ENCODE measurements at regions of chr22 and their contacts with region 1.

Region 1: GRCh38 chr22:30855699-30856518 is 112.7 kb downstream of the MORC2 start:
- DNase-seq: no peak
- H3K4me3 ChIP-seq: no peak overlapping the region
- H3K27me3 ChIP-seq: 0 out of 2 replicates have a peak, but pooled peaks cover 4% of the 10 kb centered on the region
- CTCF ChIP-seq: no peak

Region 2: GRCh38 chr22:30876915-30877553 is 21.1 kb after region 1 on chr22:
- CTCF ChIA-PET with region 1: no interaction called
- POLR2A ChIA-PET with region 1: interaction called, 10 read pairs
- DNase-seq: no peak
- H3K4me3 ChIP-seq: no peak overlapping the region
- H3K27me3 ChIP-seq: no peaks in the 10 kb centered on the region
- CTCF ChIP-seq: no peak

Region 3: GRCh38 chr22:31001124-31001770 is 145.3 kb after region 1 on chr22:
- CTCF ChIA-PET with region 1: no interaction called
- POLR2A ChIA-PET with region 1: no interaction called
- DNase-seq: no peak
- H3K4me3 ChIP-seq: no peak overlapping the region
- H3K27me3 ChIP-seq: no peaks in the 10 kb centered on the region
- CTCF ChIP-seq: no peak